Activated B cell treated with CpG ODN at 0.5 μM for 24 hours (primary cell): ENCODE measurements at regions of chr9 and their contacts with region 1.

Region 1: DNA sequence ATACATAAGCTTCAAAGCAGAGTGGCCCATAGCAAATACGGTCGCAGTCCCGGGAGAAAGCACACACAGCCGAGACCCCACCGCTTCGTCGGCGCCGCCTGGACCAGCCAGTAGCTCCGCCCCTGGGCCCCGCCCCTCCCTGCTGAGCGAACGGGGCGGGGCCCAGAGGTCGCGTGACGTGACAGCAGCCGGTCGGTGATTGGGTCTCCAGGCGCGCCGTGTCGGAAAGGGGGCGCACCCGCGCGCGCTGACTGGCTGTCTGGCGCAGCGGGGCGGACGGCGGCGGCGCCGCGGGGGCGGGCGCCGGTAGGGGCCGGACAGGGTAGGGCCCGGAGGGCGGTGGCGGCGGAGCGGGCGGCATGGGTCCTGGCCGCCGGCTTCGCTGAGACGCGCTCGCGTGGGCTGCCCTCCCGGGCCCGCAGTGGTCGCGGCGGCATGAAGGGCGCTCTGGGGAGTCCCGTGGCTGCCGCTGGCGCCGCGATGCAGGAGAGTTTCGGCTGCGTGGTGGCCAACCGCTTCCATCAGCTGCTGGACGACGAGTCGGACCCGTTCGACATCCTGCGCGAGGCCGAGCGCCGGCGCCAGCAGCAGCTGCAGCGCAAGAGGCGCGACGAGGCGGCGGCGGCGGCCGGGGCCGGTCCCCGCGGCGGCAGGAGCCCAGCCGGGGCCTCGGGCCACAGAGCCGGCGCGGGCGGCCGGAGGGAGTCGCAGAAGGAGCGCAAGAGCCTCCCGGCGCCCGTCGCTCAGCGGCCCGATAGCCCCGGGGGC is at the start of gene HABP4:
- DNase-seq: peak; percentile 97
- ATAC-seq: peak; percentile 96
- H3K4me3 Mint-ChIP-seq: peak within 1 kb of the TSS; percentile 87
- H3K27ac Mint-ChIP-seq: peak within 1 kb of the TSS; percentile 71
- H3K4me1 Mint-ChIP-seq: peaks cover 11% of the 10 kb centered on the region
- H3K27me3 Mint-ChIP-seq: peaks cover 3% of the 10 kb centered on the region
- CTCF ChIP-seq: no peak
- total RNA-seq, gene HABP4: 8.1 TPM in 2 replicates

Region 2: DNA sequence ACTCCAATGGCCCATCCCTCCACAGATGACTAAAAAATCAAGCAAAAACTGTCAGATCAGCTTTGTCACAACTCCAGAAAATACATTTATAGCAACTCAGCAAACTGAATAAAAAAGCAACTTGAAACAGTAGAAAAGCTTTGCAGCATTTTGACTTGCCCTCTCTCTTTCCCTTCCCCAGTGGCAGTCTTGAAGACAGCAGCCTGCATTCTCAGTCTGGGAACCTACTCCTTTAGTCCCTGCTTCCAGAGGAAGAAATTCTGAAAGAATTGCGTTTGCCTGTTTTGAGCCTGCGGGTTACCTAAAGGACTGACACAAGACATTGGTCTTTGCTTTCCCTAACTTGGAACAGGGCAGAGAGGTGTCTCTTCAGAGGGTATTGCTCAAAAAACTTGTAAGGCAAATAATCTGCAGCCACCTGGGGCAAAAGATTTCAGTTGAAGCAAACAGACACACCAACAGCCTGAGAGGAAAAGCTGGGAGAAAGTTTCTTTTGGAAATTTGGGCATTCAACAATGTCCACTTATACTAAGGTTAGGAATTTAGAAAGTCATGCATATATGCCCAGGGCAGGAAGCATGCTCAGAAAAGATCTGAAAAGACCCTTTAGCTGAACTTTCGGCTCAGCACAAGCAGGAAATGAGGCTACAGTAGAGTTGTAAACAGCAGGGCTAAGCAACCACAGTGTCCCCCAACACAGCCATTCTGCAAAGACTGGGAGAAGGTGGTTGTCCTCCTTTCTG is 51.3 kb before region 1 on chr9:
- CTCF ChIA-PET with region 1: interaction called, 3 read pairs
- POLR2A ChIA-PET with region 1: interaction called, 12 read pairs
- intact Hi-C with region 1: no loop called
- DNase-seq: no peak
- ATAC-seq: peak; percentile 28
- H3K4me3 Mint-ChIP-seq: peak overlapping the region; percentile 3
- H3K27ac Mint-ChIP-seq: peak overlapping the region; percentile 3
- H3K4me1 Mint-ChIP-seq: peaks cover 16% of the 10 kb centered on the region
- H3K27me3 Mint-ChIP-seq: no peaks in the 10 kb centered on the region
- CTCF ChIP-seq: no peak

Region 3: GRCh38 chr9:96478829-96479371 is 28.9 kb after region 1 on chr9:
- CTCF ChIA-PET with region 1: no interaction called
- POLR2A ChIA-PET with region 1: no interaction called
- intact Hi-C with region 1: loop called (anchors 2 kb)
- DNase-seq: no peak
- ATAC-seq: peak; percentile 74
- H3K4me3 Mint-ChIP-seq: no peak overlapping the region
- H3K27ac Mint-ChIP-seq: no peak overlapping the region
- H3K4me1 Mint-ChIP-seq: peaks cover 12% of the 10 kb centered on the region
- H3K27me3 Mint-ChIP-seq: no peaks in the 10 kb centered on the region
- CTCF ChIP-seq: no peak

Region 4: DNA sequence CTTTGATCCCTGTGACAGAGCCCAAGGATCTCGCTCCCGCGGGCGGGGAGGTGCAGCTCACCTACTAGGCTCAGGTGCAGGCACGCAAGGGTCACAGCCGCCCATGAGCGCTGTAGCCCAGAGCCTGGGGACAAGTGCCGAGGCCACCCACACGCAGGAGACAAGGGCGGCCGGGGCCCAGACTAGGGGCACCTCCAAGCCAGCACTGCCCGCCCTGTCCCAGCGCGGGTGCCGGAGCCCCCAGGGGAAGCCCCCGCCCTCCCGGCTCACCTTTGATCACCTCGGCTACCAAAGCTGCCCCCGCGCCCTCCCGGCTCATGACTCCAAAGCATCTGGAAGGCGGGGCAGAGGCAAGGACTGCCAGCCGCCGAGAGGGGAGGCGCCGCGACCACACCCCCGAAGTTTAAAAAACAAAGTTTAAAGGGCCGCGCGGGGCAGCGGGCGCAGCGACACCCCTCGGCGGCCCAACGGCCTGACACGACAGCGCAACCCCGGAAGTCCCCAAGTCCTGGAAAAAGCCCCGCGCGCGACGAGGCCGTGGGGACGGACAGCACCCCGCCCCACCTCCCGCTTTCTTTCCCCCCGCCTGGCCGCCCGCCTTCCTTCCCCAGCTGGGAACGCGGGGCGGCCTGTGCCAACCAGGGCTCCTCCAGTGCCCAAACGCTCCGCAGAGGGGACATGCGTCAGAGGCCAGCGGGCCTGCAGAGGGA is 116.6 kb after region 1 on chr9:
- CTCF ChIA-PET with region 1: no interaction called
- POLR2A ChIA-PET with region 1: interaction called, 10 read pairs
- intact Hi-C with region 1: loop called (anchors 1 kb)
- DNase-seq: peak; percentile 71
- ATAC-seq: peak; percentile 89
- H3K4me3 Mint-ChIP-seq: peak overlapping the region; percentile 86
- H3K27ac Mint-ChIP-seq: peak overlapping the region; percentile 81
- H3K4me1 Mint-ChIP-seq: peaks cover 17% of the 10 kb centered on the region
- H3K27me3 Mint-ChIP-seq: peaks cover 3% of the 10 kb centered on the region
- CTCF ChIP-seq: no peak